GM12878 (cell line): ENCODE measurements at regions of chr14 and their contacts with region 1.

Region 1: GRCh38 chr14:60349663-60350365 is 100.8 kb downstream of the PPM1A start:
- DNase-seq: no peak
- ATAC-seq: peak; percentile 81
- H3K4me3 ChIP-seq: no peak overlapping the region
- H3K27ac ChIP-seq: no peak overlapping the region
- H3K4me1 ChIP-seq: no peaks in the 10 kb centered on the region
- H3K27me3 ChIP-seq: no peaks in the 10 kb centered on the region
- CTCF ChIP-seq: peak; percentile 41 to 70 (median 65); a peak in 5 of 6 replicates
- EP300 ChIP-seq: no peak
- POLR2A ChIP-seq: no peak
- RAD21 ChIP-seq: peak; percentile 66

Region 2: GRCh38 chr14:60102389-60102788 is 247.4 kb before region 1 on chr14:
- CTCF ChIA-PET with region 1: no interaction called
- POLR2A ChIA-PET with region 1: no interaction called
- RAD21 ChIA-PET with region 1: no interaction called
- SMC1A ChIA-PET with region 1: no interaction called
- in situ Hi-C with region 1: no loop called
- intact Hi-C with region 1: no loop called
- DNase-seq: no peak
- ATAC-seq: peak; percentile 14; the same call in 1 of the 3 replicates
- H3K4me3 ChIP-seq: no peak overlapping the region
- H3K27ac ChIP-seq: no peak overlapping the region
- H3K4me1 ChIP-seq: no peaks in the 10 kb centered on the region
- H3K27me3 ChIP-seq: no peaks in the 10 kb centered on the region
- CTCF ChIP-seq: no peak
- EP300 ChIP-seq: no peak
- POLR2A ChIP-seq: no peak
- RAD21 ChIP-seq: no peak

Region 3: DNA sequence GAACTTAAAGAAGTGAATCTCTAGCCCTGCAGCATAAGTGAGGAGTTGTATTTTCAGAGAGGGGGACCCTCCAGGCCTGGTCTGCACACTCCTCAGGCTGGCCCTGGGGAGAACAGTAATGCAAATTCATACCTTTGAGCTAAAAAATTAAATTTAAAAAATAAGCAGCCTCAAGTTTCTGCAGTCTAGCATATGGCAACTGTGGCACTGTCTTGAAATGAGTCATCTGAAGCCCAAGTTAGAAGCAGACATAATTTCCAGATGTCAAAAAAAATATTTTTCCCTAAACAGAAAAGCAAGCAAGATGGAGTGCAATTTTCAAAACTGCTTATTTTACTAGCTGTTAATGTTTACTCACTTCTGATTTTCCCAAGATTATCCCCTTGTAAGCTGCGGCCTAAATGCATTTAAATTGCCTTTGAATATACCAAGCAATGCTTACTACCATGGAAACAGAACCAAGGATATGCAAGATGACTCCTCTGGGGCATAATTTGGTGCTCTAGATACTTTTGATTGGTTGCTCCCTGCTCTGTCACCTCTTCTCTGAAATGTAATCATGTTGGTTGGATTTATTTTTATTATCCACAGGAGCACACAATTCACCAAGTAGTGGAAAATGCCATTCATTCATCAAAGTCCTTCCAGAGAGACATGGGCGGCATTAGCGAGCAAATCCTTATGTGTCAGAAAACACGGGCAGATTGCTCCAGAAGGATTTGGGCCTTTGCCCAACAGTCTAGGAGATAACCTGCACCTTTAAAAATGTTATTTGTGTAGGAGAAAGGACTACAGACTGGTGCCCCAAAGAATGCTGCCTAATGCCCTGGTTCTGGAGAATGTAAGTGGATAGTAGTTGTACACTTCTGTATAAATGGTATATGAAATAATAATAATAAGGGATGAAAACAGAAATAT is 159.6 kb before region 1 on chr14:
- CTCF ChIA-PET with region 1: interaction called, 84 read pairs
- POLR2A ChIA-PET with region 1: no interaction called
- RAD21 ChIA-PET with region 1: interaction called, 11 read pairs
- SMC1A ChIA-PET with region 1: interaction called, 22 read pairs
- in situ Hi-C with region 1: no loop called
- intact Hi-C with region 1: no loop called
- DNase-seq: no peak
- ATAC-seq: peak; percentile 69
- H3K4me3 ChIP-seq: no peak overlapping the region
- H3K27ac ChIP-seq: peak overlapping the region; percentile 8; the same call in 1 of the 2 replicates
- H3K4me1 ChIP-seq: peaks cover 10% of the 10 kb centered on the region; the same call in 1 of the 2 replicates
- H3K27me3 ChIP-seq: no peaks in the 10 kb centered on the region
- CTCF ChIP-seq: no peak
- EP300 ChIP-seq: no peak
- POLR2A ChIP-seq: no peak
- RAD21 ChIP-seq: no peak

Region 4: DNA sequence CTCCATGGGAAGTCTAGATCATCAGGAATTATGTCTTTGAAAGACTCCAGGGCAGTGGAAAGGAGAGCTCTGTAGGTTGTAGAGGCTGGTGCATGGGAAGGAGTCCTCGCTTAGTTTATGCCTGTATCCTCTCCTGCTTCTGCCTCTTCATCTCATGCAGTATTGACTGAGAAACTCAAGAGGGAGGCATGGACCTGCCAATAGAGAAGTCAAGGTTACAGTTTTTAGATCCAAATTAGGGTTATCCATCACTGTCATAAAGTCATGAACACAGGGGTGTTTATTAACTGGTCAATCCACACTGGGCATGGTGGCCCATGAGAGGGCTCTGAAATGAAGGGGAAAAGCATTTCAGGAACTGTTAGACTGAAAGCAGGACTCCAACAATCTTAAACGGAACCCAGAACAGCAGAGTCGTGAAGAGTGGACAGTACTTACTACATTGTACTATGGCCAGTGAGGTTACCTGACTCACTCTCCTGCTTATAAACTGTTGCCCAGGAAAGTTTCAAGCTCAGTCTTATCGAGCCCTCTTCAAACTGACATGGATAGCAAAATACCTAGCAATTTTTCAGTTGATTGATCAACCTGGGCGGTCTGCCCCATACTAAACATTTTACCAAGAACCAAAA is 154.5 kb before region 1 on chr14:
- CTCF ChIA-PET with region 1: interaction called, 84 read pairs
- POLR2A ChIA-PET with region 1: no interaction called
- RAD21 ChIA-PET with region 1: interaction called, 12 read pairs
- SMC1A ChIA-PET with region 1: interaction called, 22 read pairs
- in situ Hi-C with region 1: no loop called
- intact Hi-C with region 1: no loop called
- DNase-seq: no peak
- ATAC-seq: peak; percentile 88
- H3K4me3 ChIP-seq: no peak overlapping the region
- H3K27ac ChIP-seq: no peak overlapping the region
- H3K4me1 ChIP-seq: peaks cover 10% of the 10 kb centered on the region
- H3K27me3 ChIP-seq: no peaks in the 10 kb centered on the region
- CTCF ChIP-seq: peak; percentile 50 to 70 (median 59); a peak in 5 of 6 replicates
- EP300 ChIP-seq: no peak
- POLR2A ChIP-seq: no peak
- RAD21 ChIP-seq: peak; percentile 91

Region 5: GRCh38 chr14:60339571-60339970 is 10.2 kb before region 1 on chr14:
- CTCF ChIA-PET with region 1: interaction called, 81 read pairs
- POLR2A ChIA-PET with region 1: interaction called, 3 read pairs
- RAD21 ChIA-PET with region 1: no interaction called
- SMC1A ChIA-PET with region 1: interaction called, 6 read pairs
- in situ Hi-C with region 1: no loop called
- intact Hi-C with region 1: no loop called
- DNase-seq: no peak
- ATAC-seq: no peak
- H3K4me3 ChIP-seq: no peak overlapping the region
- H3K27ac ChIP-seq: no peak overlapping the region
- H3K4me1 ChIP-seq: no peaks in the 10 kb centered on the region
- H3K27me3 ChIP-seq: peaks cover 0 to 2% of the 10 kb centered on the region in 2 experiments; a peak in 1 of 4 replicates
- CTCF ChIP-seq: no peak
- EP300 ChIP-seq: no peak
- POLR2A ChIP-seq: no peak
- RAD21 ChIP-seq: no peak

Region 6: GRCh38 chr14:60561845-60562746 is 212.3 kb after region 1 on chr14:
- CTCF ChIA-PET with region 1: interaction called, 170 read pairs
- POLR2A ChIA-PET with region 1: interaction called, 5 read pairs
- RAD21 ChIA-PET with region 1: interaction called, 40 read pairs
- SMC1A ChIA-PET with region 1: interaction called, 105 read pairs
- in situ Hi-C with region 1: loop called (anchors 5 kb)
- intact Hi-C with region 1: loop called (anchors 1 kb)
- DNase-seq: peak; percentile 19
- ATAC-seq: peak; percentile 94
- H3K4me3 ChIP-seq: no peak overlapping the region
- H3K27ac ChIP-seq: no peak overlapping the region
- H3K4me1 ChIP-seq: 0 out of 2 replicates have a peak, but pooled peaks cover 5% of the 10 kb centered on the region
- H3K27me3 ChIP-seq: no peaks in the 10 kb centered on the region
- CTCF ChIP-seq: peak; percentile 72 to 90 (median 79)
- EP300 ChIP-seq: no peak
- POLR2A ChIP-seq: no peak
- RAD21 ChIP-seq: peak; percentile 89

Region 7: GRCh38 chr14:61252369-61253063 is 902.7 kb after region 1 on chr14:
- CTCF ChIA-PET with region 1: interaction called, 13 read pairs
- POLR2A ChIA-PET with region 1: no interaction called
- RAD21 ChIA-PET with region 1: interaction called, 4 read pairs
- SMC1A ChIA-PET with region 1: interaction called, 3 read pairs
- in situ Hi-C with region 1: loop called (anchors 10 kb)
- intact Hi-C with region 1: loop called (anchors 1 kb)
- DNase-seq: peak; percentile 27
- ATAC-seq: peak; percentile 99
- H3K4me3 ChIP-seq: no peak overlapping the region
- H3K27ac ChIP-seq: no peak overlapping the region
- H3K4me1 ChIP-seq: no peaks in the 10 kb centered on the region
- H3K27me3 ChIP-seq: no peaks in the 10 kb centered on the region
- CTCF ChIP-seq: peak; percentile 83 to 90 (median 86)
- EP300 ChIP-seq: no peak
- POLR2A ChIP-seq: no peak
- RAD21 ChIP-seq: peak; percentile 99